B cell (primary cell): ENCODE measurements at regions of chr2 and their contacts with region 1.

Region 1: GRCh38 chr2:64330281-64331113 is 123.5 kb upstream of the LGALSL start:
- DNase-seq: peak; percentile 86
- ATAC-seq: no peak
- H3K4me3 ChIP-seq: no peak overlapping the region
- H3K4me3 Mint-ChIP-seq: peak overlapping the region; percentile 16
- H3K27ac ChIP-seq: no peak overlapping the region
- H3K27ac Mint-ChIP-seq: peak overlapping the region; percentile 33
- H3K4me1 ChIP-seq: peaks cover 24 to 36% of the 10 kb centered on the region in 2 donors
- H3K4me1 Mint-ChIP-seq: peaks cover 35% of the 10 kb centered on the region
- H3K27me3 ChIP-seq: no peaks in the 10 kb centered on the region
- H3K27me3 Mint-ChIP-seq: no peaks in the 10 kb centered on the region
- CTCF ChIP-seq: peak; percentile 94

Region 2: DNA sequence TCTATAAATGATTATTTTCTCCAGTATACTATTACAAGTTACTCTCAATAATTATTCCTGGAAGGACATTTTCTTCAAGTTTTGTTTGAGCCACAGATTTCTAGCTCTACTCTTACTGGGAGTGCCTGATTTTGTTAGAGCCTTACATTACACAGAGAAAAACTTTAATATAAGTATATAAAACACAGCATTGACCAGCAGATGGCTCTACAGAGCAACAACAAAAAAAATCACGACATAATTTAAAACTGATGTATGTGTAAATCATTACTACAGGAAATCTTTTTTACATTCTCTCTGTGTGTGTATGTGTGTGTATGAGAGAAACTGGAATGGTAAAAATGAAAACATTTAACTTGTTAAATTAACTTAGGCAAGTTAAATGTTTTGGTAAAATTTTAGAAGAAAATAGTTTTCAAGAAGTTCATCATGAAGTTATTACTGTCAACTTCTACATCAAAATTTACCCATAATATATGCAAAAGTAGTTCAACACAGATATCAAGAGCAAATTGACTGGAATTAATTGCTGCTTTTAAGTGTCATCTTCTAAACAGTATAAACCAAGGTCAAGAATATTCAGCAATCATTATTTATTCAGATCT is 638.4 kb before region 1 on chr2:
- CTCF ChIA-PET with region 1: interaction called, 10 read pairs
- POLR2A ChIA-PET with region 1: no interaction called
- intact Hi-C with region 1: loop called (anchors 5 kb)
- DNase-seq: peak; percentile 55
- ATAC-seq: no peak
- H3K4me3 ChIP-seq: no peak overlapping the region
- H3K4me3 Mint-ChIP-seq: no peak overlapping the region
- H3K27ac ChIP-seq: no peak overlapping the region
- H3K27ac Mint-ChIP-seq: no peak overlapping the region
- H3K4me1 ChIP-seq: no peaks in the 10 kb centered on the region
- H3K4me1 Mint-ChIP-seq: no peaks in the 10 kb centered on the region
- H3K27me3 ChIP-seq: no peaks in the 10 kb centered on the region
- H3K27me3 Mint-ChIP-seq: no peaks in the 10 kb centered on the region
- CTCF ChIP-seq: peak; percentile 68

Region 3: DNA sequence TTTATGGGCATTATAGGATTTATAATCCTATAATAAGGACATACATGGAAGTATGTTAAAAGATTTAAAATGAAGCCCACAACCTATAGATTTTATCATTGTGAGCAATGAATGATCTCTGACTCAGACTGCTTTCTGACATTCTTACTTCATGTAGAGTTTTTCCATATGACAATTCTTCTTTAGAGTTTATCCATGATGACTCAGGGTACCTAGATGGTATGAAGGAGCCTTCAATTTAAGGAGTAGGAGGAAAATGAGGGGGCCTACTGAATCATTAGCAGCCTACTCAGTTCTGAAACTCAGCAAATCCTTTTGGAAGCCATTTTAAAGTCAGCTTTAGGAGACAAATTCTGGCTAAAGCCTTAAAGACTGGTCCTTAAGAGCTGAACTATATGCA is 196.7 kb before region 1 on chr2:
- CTCF ChIA-PET with region 1: interaction called, 27 read pairs
- POLR2A ChIA-PET with region 1: no interaction called
- intact Hi-C with region 1: no loop called
- DNase-seq: no peak
- ATAC-seq: no peak
- H3K4me3 ChIP-seq: no peak overlapping the region
- H3K4me3 Mint-ChIP-seq: no peak overlapping the region
- H3K27ac ChIP-seq: no peak overlapping the region
- H3K27ac Mint-ChIP-seq: no peak overlapping the region
- H3K4me1 ChIP-seq: peaks cover 13 to 17% of the 10 kb centered on the region in 2 donors
- H3K4me1 Mint-ChIP-seq: peaks cover 63% of the 10 kb centered on the region
- H3K27me3 ChIP-seq: no peaks in the 10 kb centered on the region
- H3K27me3 Mint-ChIP-seq: no peaks in the 10 kb centered on the region
- CTCF ChIP-seq: no peak

Region 4: GRCh38 chr2:64260817-64261216 is 69.7 kb before region 1 on chr2:
- CTCF ChIA-PET with region 1: interaction called, 17 read pairs
- POLR2A ChIA-PET with region 1: interaction called, 3 read pairs
- intact Hi-C with region 1: loop called (anchors 5 kb)
- DNase-seq: peak; percentile 82
- ATAC-seq: peak; percentile 94
- H3K4me3 ChIP-seq: peak overlapping the region; percentile 2 to 51 (median 38)
- H3K4me3 Mint-ChIP-seq: peak overlapping the region; percentile 74
- H3K27ac ChIP-seq: peak overlapping the region; percentile 46 to 85
- H3K27ac Mint-ChIP-seq: peak overlapping the region; percentile 87
- H3K4me1 ChIP-seq: peaks cover 26 to 31% of the 10 kb centered on the region in 2 donors
- H3K4me1 Mint-ChIP-seq: peaks cover 50% of the 10 kb centered on the region
- H3K27me3 ChIP-seq: no peaks in the 10 kb centered on the region
- H3K27me3 Mint-ChIP-seq: no peaks in the 10 kb centered on the region
- CTCF ChIP-seq: no peak

Region 5: DNA sequence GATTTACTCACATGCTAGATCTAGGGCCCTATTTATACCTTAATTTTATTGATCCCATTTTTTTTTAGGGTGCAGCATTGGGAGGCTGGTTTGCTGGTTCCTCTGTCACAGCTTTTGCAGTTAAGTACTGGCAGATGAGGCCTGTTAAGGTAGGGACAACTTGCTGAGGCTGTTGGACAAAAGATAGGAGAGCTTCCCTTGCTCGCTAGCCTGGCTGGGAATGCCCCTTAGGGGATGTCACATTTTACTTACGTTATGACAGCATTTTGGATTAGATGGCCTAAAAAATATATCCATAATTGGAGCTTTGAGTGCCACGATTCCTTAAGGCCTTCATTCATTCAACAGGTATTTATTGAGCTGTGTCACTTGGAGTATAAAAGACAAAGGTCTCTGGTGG is 131.7 kb after region 1 on chr2:
- CTCF ChIA-PET with region 1: no interaction called
- POLR2A ChIA-PET with region 1: no interaction called
- intact Hi-C with region 1: no loop called
- DNase-seq: no peak
- ATAC-seq: no peak
- H3K4me3 ChIP-seq: no peak overlapping the region
- H3K4me3 Mint-ChIP-seq: no peak overlapping the region
- H3K27ac ChIP-seq: no peak overlapping the region
- H3K27ac Mint-ChIP-seq: no peak overlapping the region
- H3K4me1 ChIP-seq: no peaks in the 10 kb centered on the region
- H3K4me1 Mint-ChIP-seq: no peaks in the 10 kb centered on the region
- H3K27me3 ChIP-seq: peaks cover 0 to 3% (median 0%) of the 10 kb centered on the region in 4 experiments
- H3K27me3 Mint-ChIP-seq: no peaks in the 10 kb centered on the region
- CTCF ChIP-seq: no peak

Region 6: GRCh38 chr2:64474121-64474571 is 143.6 kb after region 1 on chr2:
- CTCF ChIA-PET with region 1: interaction called, 398 read pairs
- POLR2A ChIA-PET with region 1: no interaction called
- intact Hi-C with region 1: no loop called
- DNase-seq: peak; percentile 54
- ATAC-seq: peak; percentile 66
- H3K4me3 ChIP-seq: no peak overlapping the region
- H3K4me3 Mint-ChIP-seq: no peak overlapping the region
- H3K27ac ChIP-seq: no peak overlapping the region
- H3K27ac Mint-ChIP-seq: peak overlapping the region; percentile 44
- H3K4me1 ChIP-seq: peaks cover 12 to 13% of the 10 kb centered on the region in 2 donors
- H3K4me1 Mint-ChIP-seq: peaks cover 13% of the 10 kb centered on the region
- H3K27me3 ChIP-seq: no peaks in the 10 kb centered on the region
- H3K27me3 Mint-ChIP-seq: no peaks in the 10 kb centered on the region
- CTCF ChIP-seq: no peak

Region 7: GRCh38 chr2:64562148-64562784 is 231.8 kb after region 1 on chr2:
- CTCF ChIA-PET with region 1: interaction called, 146 read pairs
- POLR2A ChIA-PET with region 1: no interaction called
- intact Hi-C with region 1: loop called (anchors 1 kb)
- DNase-seq: peak; percentile 67
- ATAC-seq: peak; percentile 51
- H3K4me3 ChIP-seq: no peak overlapping the region
- H3K4me3 Mint-ChIP-seq: no peak overlapping the region
- H3K27ac ChIP-seq: no peak overlapping the region
- H3K27ac Mint-ChIP-seq: peak overlapping the region; percentile 38
- H3K4me1 ChIP-seq: peaks cover 5 to 7% of the 10 kb centered on the region in 2 donors
- H3K4me1 Mint-ChIP-seq: peaks cover 39% of the 10 kb centered on the region
- H3K27me3 ChIP-seq: no peaks in the 10 kb centered on the region
- H3K27me3 Mint-ChIP-seq: no peaks in the 10 kb centered on the region
- CTCF ChIP-seq: peak; percentile 76

Region 8: DNA sequence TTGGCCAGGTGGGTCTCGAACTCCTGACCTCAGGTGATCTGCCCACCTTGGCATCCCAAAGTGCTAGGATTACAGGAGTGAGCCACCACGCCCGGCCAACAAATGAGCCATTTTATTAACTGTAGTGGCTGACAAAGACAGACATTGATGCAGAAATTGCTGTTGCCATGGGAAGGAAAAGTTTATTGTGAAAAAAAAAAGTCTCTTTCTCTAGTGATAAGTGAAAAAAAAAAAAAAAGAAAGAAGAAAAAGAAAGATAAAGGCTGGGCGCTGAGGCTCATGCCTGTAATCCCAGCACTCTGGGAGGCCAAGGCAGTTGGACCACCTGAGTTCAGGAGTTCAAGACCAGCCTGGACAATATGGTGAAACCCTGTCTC is 839.3 kb after region 1 on chr2:
- CTCF ChIA-PET with region 1: interaction called, 3 read pairs
- POLR2A ChIA-PET with region 1: no interaction called
- intact Hi-C with region 1: loop called (anchors 2 kb)
- DNase-seq: no peak
- ATAC-seq: no peak
- H3K4me3 ChIP-seq: no peak overlapping the region
- H3K4me3 Mint-ChIP-seq: no peak overlapping the region
- H3K27ac ChIP-seq: no peak overlapping the region
- H3K27ac Mint-ChIP-seq: no peak overlapping the region
- H3K4me1 ChIP-seq: peaks cover 8 to 10% of the 10 kb centered on the region in 2 donors
- H3K4me1 Mint-ChIP-seq: peaks cover 12% of the 10 kb centered on the region
- H3K27me3 ChIP-seq: no peaks in the 10 kb centered on the region
- H3K27me3 Mint-ChIP-seq: no peaks in the 10 kb centered on the region
- CTCF ChIP-seq: no peak